GM12878 (cell line): ENCODE measurements at regions of chr2 and their contacts with region 1.

Region 1: DNA sequence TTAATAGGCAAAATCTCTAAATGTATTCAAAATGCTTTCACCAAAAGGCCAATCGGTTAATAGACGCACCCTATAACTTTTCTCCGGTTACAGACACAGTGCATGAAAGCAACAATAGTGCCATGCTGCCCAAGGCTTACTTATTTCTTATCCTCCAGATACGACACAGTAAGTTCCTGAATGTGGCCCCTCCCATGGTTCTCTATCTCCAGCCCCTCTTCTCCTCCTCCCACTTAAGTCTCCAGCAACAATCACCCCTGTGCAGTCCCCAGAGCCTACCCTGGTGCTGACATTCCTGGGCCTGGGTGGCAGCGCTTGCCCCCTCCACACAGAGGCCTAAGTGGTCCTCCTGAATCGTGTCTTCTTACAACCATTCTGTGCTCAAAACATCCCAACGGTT is 3.6 kb downstream of the KIDINS220 start:
- DNase-seq: no peak
- ATAC-seq: no peak
- H3K4me3 ChIP-seq: no peak overlapping the region
- H3K27ac ChIP-seq: no peak overlapping the region
- H3K4me1 ChIP-seq: no peaks in the 10 kb centered on the region
- H3K27me3 ChIP-seq: no peaks in the 10 kb centered on the region
- CTCF ChIP-seq: no peak
- EP300 ChIP-seq: no peak
- POLR2A ChIP-seq: no peak
- RAD21 ChIP-seq: no peak

Region 2: DNA sequence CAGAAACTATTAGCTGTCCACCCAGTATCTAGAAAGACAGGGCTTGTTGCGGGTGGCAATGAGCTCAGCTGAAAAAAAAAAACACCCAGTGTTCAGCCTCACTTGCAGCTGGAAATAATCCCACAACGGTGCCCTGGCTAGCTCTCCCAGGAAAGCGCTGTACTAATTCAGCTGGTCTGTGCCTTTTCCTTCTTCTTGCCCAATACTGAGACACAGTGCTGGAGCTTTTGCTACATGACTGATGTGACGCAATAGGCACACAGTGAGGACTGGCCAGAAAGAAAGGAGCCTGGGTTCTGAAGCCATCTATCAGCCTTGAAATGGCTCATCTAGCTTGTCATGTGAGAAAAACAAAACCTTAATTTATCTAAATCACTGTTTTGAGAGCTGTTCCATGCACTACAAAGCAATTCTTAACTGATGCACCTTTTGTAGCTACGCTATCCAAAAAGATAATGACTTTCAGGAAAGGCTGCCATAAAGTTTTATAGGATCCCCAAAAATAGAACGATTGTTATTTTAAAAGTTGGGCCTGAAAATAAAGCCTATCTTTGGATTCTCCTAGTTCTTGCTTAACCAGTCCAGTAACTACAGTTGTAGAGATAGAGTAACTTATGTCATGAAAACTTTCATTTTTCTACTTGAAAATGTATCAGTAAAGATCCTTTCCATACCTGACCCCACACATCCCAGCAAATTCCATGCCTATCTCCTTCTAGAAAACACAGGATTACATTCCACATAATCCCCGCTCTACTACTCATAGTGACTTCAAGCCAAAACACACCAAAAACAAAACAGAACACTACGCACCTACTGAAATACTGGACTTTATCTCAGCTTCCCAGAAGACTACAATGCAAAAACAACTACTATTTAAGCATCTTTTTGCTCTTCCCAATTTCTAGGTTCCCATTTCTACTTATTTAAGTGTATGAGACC is 12.3 kb before region 1 on chr2:
- CTCF ChIA-PET with region 1: interaction called, 5 read pairs
- POLR2A ChIA-PET with region 1: interaction called, 5 read pairs
- RAD21 ChIA-PET with region 1: interaction called, 4 read pairs
- SMC1A ChIA-PET with region 1: interaction called, 11 read pairs
- in situ Hi-C with region 1: no loop called
- intact Hi-C with region 1: no loop called
- DNase-seq: no peak
- ATAC-seq: no peak
- H3K4me3 ChIP-seq: no peak overlapping the region
- H3K27ac ChIP-seq: no peak overlapping the region
- H3K4me1 ChIP-seq: no peaks in the 10 kb centered on the region
- H3K27me3 ChIP-seq: no peaks in the 10 kb centered on the region
- CTCF ChIP-seq: no peak
- EP300 ChIP-seq: no peak
- POLR2A ChIP-seq: no peak
- RAD21 ChIP-seq: no peak

Region 3: DNA sequence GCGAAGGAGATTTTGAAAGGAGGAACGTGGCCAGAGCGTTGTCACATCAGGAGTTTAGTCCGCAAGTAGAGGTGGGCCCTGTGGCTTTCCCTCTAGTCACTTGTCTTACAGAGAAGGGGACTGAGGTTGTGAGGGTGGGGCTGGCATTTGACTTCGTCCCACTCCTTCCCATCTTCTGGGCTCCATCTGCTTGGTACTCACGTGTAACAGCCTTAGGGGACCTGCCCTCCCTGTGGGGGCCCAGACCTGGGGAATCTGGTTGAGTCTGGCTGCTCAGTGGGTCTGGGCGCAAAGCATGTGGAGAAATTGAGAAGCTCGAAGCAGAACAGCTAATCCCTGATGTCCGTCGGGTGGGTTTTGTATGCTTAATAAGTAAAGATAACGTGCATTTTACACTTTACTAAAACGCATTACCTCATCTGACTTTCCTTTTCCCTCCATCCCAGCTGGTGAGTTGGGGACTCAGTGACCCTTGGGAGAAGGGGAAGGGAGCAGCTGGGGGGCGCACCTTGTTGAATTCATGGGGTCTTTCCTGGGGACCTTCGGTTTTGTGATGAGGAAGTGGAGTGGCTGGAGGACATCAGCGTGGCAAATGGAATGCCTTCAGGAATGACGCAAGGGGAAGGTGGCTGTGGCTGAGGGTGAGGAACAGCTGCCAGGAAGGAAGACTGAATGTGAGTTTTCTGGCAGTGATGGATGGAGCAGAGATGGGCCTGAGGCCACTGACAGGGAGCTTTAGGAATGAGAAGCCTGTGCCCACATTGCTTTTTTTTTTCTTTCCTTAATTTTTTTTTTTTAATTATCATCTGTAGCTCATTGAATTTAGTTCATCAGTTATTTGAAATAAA is 417.5 kb after region 1 on chr2:
- CTCF ChIA-PET with region 1: no interaction called
- POLR2A ChIA-PET with region 1: no interaction called
- RAD21 ChIA-PET with region 1: no interaction called
- SMC1A ChIA-PET with region 1: no interaction called
- in situ Hi-C with region 1: no loop called
- intact Hi-C with region 1: no loop called
- DNase-seq: no peak
- ATAC-seq: no peak
- H3K4me3 ChIP-seq: no peak overlapping the region
- H3K27ac ChIP-seq: no peak overlapping the region
- H3K4me1 ChIP-seq: no peaks in the 10 kb centered on the region
- H3K27me3 ChIP-seq: no peaks in the 10 kb centered on the region; a peak in 1 of 4 replicates
- CTCF ChIP-seq: no peak
- EP300 ChIP-seq: no peak
- POLR2A ChIP-seq: no peak
- RAD21 ChIP-seq: no peak